Right lobe of liver (tissue), 6 donors: ENCODE measurements at regions of chr4 and their contacts with region 1.

Region 1: DNA sequence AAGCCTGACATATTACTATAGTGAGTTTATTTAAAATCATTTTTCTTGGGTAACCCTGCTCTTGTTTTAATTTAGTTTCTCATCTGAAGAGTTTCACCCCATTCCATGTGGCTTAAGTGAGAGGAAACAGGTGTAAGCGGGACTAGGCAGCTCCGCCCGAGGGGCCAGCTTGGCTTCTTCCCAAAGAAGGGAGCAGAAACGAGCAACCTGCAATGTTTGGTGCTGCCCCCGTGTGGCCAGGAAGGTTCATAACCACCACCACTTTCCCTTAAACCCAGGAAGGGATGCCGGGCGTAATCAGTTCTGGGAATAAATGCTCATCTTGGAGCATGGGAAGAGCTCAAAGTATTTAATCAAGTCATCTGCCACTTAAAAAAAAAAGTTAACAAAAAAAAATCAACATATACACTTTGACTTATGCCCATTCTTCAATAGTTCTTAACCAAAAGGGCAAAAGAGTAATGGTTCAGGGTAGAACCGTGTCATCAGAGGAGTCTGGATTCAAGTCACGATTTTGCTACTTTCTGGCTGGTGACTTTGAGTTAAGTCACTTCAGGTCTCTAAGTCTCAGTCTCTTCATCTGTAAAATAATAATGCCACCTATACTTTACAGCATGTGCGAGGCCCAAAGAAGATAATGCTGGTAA is 147.9 kb downstream of the NSUN7 start:
- DNase-seq: peak; percentile 62 to 74 (median 73)
- ATAC-seq: peak; percentile 85 to 91 (median 87)
- H3K4me3 ChIP-seq: no peak overlapping the region
- H3K27ac ChIP-seq: no peak overlapping the region
- H3K4me1 ChIP-seq: no peaks in the 10 kb centered on the region
- H3K27me3 ChIP-seq: no peaks in the 10 kb centered on the region
- CTCF ChIP-seq: peak; percentile 55 to 80 (median 78)
- POLR2A ChIP-seq: no peak

Region 2: GRCh38 chr4:40736910-40737309 is 160.8 kb before region 1 on chr4:
- intact Hi-C with region 1: loop called (anchors 10 kb)
- DNase-seq: no peak
- ATAC-seq: peak; percentile 39 to 66 (median 57)
- H3K4me3 ChIP-seq: no peak overlapping the region
- H3K27ac ChIP-seq: no peak overlapping the region
- H3K4me1 ChIP-seq: peaks cover 0 to 3% (median 0%) of the 10 kb centered on the region in 4 donors
- H3K27me3 ChIP-seq: no peaks in the 10 kb centered on the region
- CTCF ChIP-seq: peak; percentile 21 to 48 (median 32)
- POLR2A ChIP-seq: no peak

Region 3: DNA sequence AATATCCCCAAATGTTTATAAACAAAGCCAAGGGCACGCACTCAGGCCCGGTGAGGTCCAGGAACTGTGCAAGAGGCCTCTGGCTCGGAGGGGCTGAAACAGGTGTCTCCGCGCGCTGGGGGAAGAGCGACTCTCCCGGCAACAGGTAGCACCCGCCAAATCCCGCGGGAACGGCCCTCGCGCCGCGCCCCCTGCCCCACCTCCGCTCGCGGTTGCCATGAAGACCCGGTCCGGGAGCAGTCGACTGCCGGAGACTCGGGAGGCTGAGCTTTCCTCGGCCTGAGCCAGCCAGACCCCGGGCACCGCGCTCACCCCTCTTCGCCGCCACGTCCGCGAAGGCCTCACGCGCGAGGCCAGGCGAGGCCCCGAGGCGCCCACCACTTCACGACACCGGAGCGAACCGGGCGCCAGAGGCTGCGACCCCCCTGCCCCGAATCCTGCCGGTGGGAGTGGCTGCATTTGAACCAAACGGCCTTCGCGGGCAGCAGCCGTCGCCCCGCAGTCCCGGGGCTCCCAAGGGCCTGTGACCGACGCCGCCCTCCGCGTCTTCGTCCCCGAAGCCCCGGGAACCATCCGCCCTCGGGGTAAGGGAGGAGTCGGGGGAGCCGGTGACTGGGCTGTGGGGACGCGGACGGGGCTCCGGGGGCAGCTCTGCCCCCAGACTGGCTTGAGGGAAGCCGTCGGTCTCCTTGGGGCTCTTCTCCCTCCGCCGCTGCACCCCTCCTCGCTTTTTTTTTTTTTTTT is 147.8 kb before region 1 on chr4 and contains the start of gene NSUN7:
- intact Hi-C with region 1: loop called in 1 of 2 experiments (anchors 10 kb)
- DNase-seq: peak; percentile 49 to 68 (median 60)
- ATAC-seq: peak; percentile 73 to 87 (median 78)
- H3K4me3 ChIP-seq: peak within 1 kb of the TSS; percentile 42 to 53 (median 47)
- H3K27ac ChIP-seq: no peak within 1 kb of the TSS
- H3K4me1 ChIP-seq: peaks cover 0 to 2% (median 0%) of the 10 kb centered on the region in 4 donors
- H3K27me3 ChIP-seq: no peaks in the 10 kb centered on the region
- CTCF ChIP-seq: no peak
- POLR2A ChIP-seq: no peak
- total RNA-seq, gene NSUN7: 0.18 to 0.61 (median 0.36) TPM

Region 4: DNA sequence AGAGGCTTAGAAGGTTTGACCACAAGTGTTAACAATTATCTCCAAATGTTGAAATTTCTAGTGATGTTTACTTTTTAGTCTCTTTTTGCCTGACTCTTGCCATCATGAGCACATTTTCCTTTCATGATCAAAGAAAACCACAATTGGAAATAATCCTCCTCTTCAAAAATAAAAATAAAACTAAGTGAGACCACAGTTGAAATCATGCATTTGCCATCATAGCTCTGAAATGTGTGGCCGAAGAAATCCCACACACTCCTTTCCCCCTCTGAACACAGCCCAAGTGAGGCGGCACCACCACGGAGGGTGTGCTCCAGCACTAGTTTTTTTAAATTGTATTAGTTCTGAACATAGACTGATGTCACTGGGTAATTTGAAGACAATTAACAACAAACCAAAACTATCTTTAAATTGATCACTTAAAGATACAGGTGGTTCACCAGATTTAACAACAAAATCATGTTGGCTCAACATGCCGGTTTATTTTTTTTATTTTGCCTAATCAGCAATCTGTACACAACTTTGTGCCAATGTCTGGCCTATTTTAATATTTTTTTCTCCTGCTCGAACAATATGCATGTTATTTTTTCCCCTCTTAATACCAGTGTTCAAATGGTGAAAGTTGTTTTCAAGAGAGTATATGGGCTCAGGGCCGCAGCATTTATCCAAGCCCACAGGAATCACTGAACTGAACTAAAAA is 299.1 kb after region 1 on chr4:
- intact Hi-C with region 1: no loop called
- DNase-seq: no peak
- ATAC-seq: no peak
- H3K4me3 ChIP-seq: no peak overlapping the region
- H3K27ac ChIP-seq: no peak overlapping the region
- H3K4me1 ChIP-seq: no peaks in the 10 kb centered on the region
- H3K27me3 ChIP-seq: no peaks in the 10 kb centered on the region
- CTCF ChIP-seq: no peak
- POLR2A ChIP-seq: no peak